Activated B cell treated with CpG ODN at 0.5 μM for 24 hours (primary cell): ENCODE measurements at regions of chr2 and their contacts with region 1.

Region 1: GRCh38 chr2:189096769-189097447 is 82.7 kb downstream of the COL5A2 start:
- DNase-seq: no peak
- ATAC-seq: no peak
- H3K4me3 Mint-ChIP-seq: no peak overlapping the region
- H3K27ac Mint-ChIP-seq: no peak overlapping the region
- H3K4me1 Mint-ChIP-seq: no peaks in the 10 kb centered on the region
- H3K27me3 Mint-ChIP-seq: no peaks in the 10 kb centered on the region
- CTCF ChIP-seq: no peak

Region 2: DNA sequence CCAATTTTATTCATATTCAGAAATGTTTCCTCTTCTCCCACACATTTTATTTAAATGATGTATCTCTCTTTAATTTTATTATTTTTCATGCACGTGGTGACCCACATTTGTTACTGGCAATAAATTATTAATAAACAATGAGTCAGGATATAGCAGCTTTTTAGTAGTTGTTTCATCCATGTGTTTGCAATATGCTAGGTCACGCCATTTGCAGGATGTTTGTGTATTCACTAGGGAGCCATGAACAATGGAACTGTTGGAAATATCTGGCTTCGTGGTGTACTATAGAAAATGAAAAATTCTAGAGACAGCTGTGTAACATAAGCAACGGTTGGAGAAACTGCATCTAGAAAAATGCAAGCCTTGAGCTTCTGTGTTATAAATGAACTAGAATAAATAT is 298.7 kb before region 1 on chr2:
- CTCF ChIA-PET with region 1: no interaction called
- POLR2A ChIA-PET with region 1: no interaction called
- intact Hi-C with region 1: no loop called
- DNase-seq: no peak
- ATAC-seq: no peak
- H3K4me3 Mint-ChIP-seq: no peak overlapping the region
- H3K27ac Mint-ChIP-seq: no peak overlapping the region
- H3K4me1 Mint-ChIP-seq: no peaks in the 10 kb centered on the region
- H3K27me3 Mint-ChIP-seq: no peaks in the 10 kb centered on the region
- CTCF ChIP-seq: no peak

Region 3: DNA sequence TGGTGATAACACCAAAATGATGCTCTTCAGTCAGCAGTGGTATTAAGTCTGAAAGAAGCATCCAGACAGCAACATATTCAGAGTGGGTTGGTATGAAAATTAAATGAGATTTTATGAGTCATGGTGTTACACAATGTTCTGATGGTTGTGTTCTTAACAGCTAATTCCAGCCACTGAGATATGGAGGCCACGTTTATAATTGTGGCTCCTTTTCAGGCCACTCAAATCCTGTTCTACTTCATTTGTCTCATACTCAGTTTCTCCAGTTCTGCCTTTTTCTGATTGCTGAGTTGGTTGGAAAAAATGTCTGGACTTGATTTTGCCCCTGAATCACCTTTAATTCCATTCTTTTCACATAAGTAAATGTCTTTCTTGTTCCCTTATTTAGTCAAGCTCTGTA is 285.4 kb before region 1 on chr2:
- CTCF ChIA-PET with region 1: no interaction called
- POLR2A ChIA-PET with region 1: no interaction called
- intact Hi-C with region 1: no loop called
- DNase-seq: no peak
- ATAC-seq: no peak
- H3K4me3 Mint-ChIP-seq: no peak overlapping the region
- H3K27ac Mint-ChIP-seq: no peak overlapping the region
- H3K4me1 Mint-ChIP-seq: no peaks in the 10 kb centered on the region
- H3K27me3 Mint-ChIP-seq: no peaks in the 10 kb centered on the region
- CTCF ChIP-seq: no peak

Region 4: GRCh38 chr2:189118386-189118785 is 21.5 kb after region 1 on chr2:
- CTCF ChIA-PET with region 1: no interaction called
- POLR2A ChIA-PET with region 1: no interaction called
- intact Hi-C with region 1: no loop called
- DNase-seq: no peak
- ATAC-seq: no peak
- H3K4me3 Mint-ChIP-seq: no peak overlapping the region
- H3K27ac Mint-ChIP-seq: no peak overlapping the region
- H3K4me1 Mint-ChIP-seq: no peaks in the 10 kb centered on the region
- H3K27me3 Mint-ChIP-seq: no peaks in the 10 kb centered on the region
- CTCF ChIP-seq: no peak

Region 5: GRCh38 chr2:189287982-189288521 is 191.1 kb after region 1 on chr2:
- CTCF ChIA-PET with region 1: no interaction called
- POLR2A ChIA-PET with region 1: no interaction called
- intact Hi-C with region 1: loop called (anchors 5 kb)
- DNase-seq: no peak
- ATAC-seq: no peak
- H3K4me3 Mint-ChIP-seq: no peak overlapping the region
- H3K27ac Mint-ChIP-seq: no peak overlapping the region
- H3K4me1 Mint-ChIP-seq: no peaks in the 10 kb centered on the region
- H3K27me3 Mint-ChIP-seq: no peaks in the 10 kb centered on the region
- CTCF ChIP-seq: no peak

Region 6: DNA sequence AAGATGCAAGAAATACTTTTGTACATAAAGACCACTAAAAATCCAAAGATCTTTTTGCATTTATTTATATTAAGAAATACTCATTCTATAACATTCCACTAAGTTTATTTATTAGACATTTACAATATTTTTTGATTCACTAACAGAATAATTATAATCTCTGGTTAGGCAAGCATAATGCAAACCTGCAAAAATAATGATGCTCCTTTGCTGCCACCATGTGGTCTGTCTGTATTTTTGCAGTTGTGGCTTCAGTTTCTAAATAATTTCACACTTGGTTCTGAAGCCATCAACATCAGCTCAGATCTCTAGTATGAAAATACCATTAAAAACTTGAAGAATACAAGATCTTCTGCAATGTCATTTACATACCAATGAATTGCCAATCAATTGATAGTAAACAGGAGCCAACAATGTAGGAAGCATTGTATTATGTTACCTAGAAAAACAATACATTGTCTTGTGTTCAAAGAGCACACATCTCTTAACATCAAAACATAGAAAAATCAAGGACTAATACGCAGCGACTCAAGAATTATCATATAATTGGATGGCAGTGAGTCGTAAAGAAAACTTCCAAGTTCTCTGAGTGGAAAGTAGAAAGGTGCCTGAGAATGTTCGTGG is 315.5 kb after region 1 on chr2:
- CTCF ChIA-PET with region 1: interaction called, 4 read pairs
- POLR2A ChIA-PET with region 1: no interaction called
- intact Hi-C with region 1: loop called (anchors 1 kb)
- DNase-seq: no peak
- ATAC-seq: no peak
- H3K4me3 Mint-ChIP-seq: no peak overlapping the region
- H3K27ac Mint-ChIP-seq: no peak overlapping the region
- H3K4me1 Mint-ChIP-seq: no peaks in the 10 kb centered on the region
- H3K27me3 Mint-ChIP-seq: no peaks in the 10 kb centered on the region
- CTCF ChIP-seq: no peak

Region 7: GRCh38 chr2:189698020-189698887 is 601.3 kb after region 1 on chr2:
- CTCF ChIA-PET with region 1: no interaction called
- POLR2A ChIA-PET with region 1: no interaction called
- intact Hi-C with region 1: loop called (anchors 1 kb)
- DNase-seq: no peak
- ATAC-seq: peak; percentile 58
- H3K4me3 Mint-ChIP-seq: no peak overlapping the region
- H3K27ac Mint-ChIP-seq: no peak overlapping the region
- H3K4me1 Mint-ChIP-seq: peaks cover 2% of the 10 kb centered on the region
- H3K27me3 Mint-ChIP-seq: no peaks in the 10 kb centered on the region
- CTCF ChIP-seq: no peak

Region 8: DNA sequence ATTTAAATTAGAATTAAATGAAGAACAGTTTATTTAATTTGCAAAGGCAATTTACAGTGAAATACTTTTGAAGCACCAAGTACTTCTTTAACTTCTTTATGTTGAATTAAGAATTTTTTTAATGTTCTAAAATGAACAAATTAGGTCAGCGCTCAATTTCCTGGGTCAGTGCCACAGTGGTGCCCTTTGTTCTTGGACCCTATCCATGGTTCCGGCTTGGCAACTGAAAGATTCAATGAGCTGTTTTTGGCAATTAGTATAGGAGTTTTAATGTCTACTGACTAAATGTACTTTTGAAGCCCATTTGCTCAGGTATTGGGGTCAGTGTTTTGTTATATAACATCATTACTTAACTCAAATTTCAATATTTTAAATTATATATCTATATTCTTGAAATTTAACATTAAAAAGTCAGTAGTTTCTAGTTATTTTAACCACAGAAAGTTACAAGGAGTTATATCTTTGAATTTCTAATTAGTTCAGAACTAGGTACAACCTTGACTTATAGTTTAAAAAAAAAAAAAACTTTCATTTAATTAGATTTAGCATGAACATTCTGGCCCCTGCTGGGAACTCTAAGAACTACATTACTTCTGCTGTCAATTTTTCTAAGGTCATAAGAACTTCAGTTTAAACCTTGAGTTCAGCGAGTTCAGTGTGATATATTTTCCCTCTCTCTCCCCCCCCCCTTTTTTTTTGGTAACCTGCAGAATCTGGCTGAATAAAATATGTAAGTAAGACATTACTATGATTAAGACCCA is 973.2 kb after region 1 on chr2:
- CTCF ChIA-PET with region 1: no interaction called
- POLR2A ChIA-PET with region 1: no interaction called
- intact Hi-C with region 1: loop called (anchors 5 kb)
- DNase-seq: no peak
- ATAC-seq: peak; percentile 61
- H3K4me3 Mint-ChIP-seq: no peak overlapping the region
- H3K27ac Mint-ChIP-seq: no peak overlapping the region
- H3K4me1 Mint-ChIP-seq: no peaks in the 10 kb centered on the region
- H3K27me3 Mint-ChIP-seq: no peaks in the 10 kb centered on the region
- CTCF ChIP-seq: no peak